SK-N-SH (cell line): ENCODE measurements at regions of chr22 and their contacts with region 1.

Region 1: DNA sequence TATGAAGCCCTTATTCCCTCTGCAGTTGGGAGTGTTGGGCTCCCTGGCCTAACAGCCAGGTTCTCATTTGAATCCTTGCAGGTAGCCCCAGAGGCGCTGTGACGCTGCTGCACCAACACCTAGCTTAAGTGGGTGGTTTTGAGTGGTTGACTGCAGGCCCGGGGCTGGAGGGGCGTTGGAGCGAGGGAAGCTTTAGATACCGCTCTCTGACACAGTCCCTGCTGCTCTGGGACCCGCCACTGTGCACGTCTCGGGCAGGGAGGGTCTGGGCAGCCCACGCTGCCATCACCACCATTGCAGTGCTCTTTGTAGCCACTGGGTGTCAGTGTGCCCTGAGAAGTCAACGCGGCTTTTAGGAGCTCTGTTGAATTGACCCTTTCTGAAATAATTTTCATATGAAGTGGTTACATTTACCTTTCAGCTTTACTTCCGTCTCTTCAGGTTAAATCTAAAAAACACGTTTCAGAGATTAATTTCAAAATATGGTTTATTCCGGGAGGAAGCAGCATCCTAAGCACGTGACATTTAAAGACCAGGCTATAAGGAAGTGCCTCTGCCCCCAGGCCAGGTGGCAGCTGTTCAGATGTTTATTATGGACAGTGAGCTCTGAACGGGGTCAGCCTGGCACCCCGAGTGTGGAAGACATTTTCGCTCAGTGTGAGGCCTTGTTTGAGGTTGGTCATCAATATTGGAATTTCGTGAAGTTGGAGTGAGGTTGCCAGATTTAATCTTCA is 30.9 kb upstream of the PARVB start:
- DNase-seq: peak; percentile 88
- H3K4me3 ChIP-seq: peak overlapping the region in 1 of 2 experiments; percentile 27; a peak in 1 of 4 replicates
- H3K27ac ChIP-seq: no peak overlapping the region; a peak in 1 of 4 replicates
- H3K4me1 ChIP-seq: peaks cover 0 to 6% of the 10 kb centered on the region in 2 experiments; a peak in 1 of 4 replicates
- H3K27me3 ChIP-seq: no peaks in the 10 kb centered on the region
- CTCF ChIP-seq: peak; percentile 98
- EP300 ChIP-seq: no peak
- RAD21 ChIP-seq: peak; percentile 91

Region 2: GRCh38 chr22:43976861-43977795 is 16.1 kb before region 1 on chr22:
- CTCF ChIA-PET with region 1: interaction called, 35 read pairs
- POLR2A ChIA-PET with region 1: no interaction called
- DNase-seq: no peak
- H3K4me3 ChIP-seq: no peak overlapping the region
- H3K27ac ChIP-seq: no peak overlapping the region
- H3K4me1 ChIP-seq: no peaks in the 10 kb centered on the region
- H3K27me3 ChIP-seq: no peaks in the 10 kb centered on the region
- CTCF ChIP-seq: no peak
- EP300 ChIP-seq: no peak
- RAD21 ChIP-seq: no peak

Region 3: GRCh38 chr22:44023404-44024287 is 30.5 kb after region 1 on chr22:
- CTCF ChIA-PET with region 1: interaction called, 16 read pairs
- POLR2A ChIA-PET with region 1: no interaction called
- DNase-seq: peak; percentile 87
- H3K4me3 ChIP-seq: peak overlapping the region; percentile 53 to 65
- H3K27ac ChIP-seq: peak overlapping the region; percentile 59 to 62; a peak in 3 of 4 replicates
- H3K4me1 ChIP-seq: peaks cover 11% of the 10 kb centered on the region in 2 experiments; a peak in 2 of 4 replicates
- H3K27me3 ChIP-seq: no peaks in the 10 kb centered on the region
- CTCF ChIP-seq: no peak
- EP300 ChIP-seq: no peak
- RAD21 ChIP-seq: no peak

Region 4: GRCh38 chr22:44068422-44069191 is 75.4 kb after region 1 on chr22:
- CTCF ChIA-PET with region 1: interaction called, 22 read pairs
- POLR2A ChIA-PET with region 1: no interaction called
- DNase-seq: no peak
- H3K4me3 ChIP-seq: no peak overlapping the region
- H3K27ac ChIP-seq: no peak overlapping the region
- H3K4me1 ChIP-seq: no peaks in the 10 kb centered on the region
- H3K27me3 ChIP-seq: no peaks in the 10 kb centered on the region
- CTCF ChIP-seq: no peak
- EP300 ChIP-seq: no peak
- RAD21 ChIP-seq: no peak

Region 5: DNA sequence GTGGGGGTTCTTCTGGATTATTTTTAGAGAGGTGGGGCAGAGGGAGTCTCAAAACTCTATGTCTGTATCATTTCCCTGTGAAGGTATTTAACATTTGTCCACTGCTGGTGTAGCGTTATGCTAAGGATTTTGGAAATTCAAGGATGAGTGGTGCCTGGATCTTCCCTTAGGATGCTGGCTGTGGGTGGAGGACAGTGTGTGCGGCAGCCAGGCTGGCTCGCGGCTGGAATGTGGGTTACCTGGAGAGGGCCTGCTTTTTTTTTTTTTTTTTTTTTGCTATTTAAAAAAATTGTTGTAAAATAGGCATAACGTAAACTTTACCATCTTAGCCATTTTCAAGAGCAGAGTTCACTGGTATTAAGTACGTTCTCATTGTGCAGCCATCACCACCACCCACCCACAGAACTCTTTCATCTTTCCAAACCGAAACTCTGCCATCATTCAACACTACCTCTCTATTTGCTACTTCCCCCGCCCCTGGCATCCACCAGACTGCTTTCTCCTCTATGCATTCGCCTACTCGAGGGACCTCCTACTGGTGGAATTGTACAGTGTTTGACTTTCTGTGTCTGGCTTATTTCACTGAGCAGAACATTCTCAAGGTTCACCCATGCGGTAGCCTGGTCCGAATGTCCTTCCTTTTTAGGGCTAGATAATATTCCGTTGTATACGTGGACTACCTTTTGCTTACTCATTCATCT is 98.0 kb after region 1 on chr22:
- CTCF ChIA-PET with region 1: interaction called, 234 read pairs
- POLR2A ChIA-PET with region 1: no interaction called
- DNase-seq: peak; percentile 59
- H3K4me3 ChIP-seq: no peak overlapping the region
- H3K27ac ChIP-seq: no peak overlapping the region
- H3K4me1 ChIP-seq: no peaks in the 10 kb centered on the region
- H3K27me3 ChIP-seq: no peaks in the 10 kb centered on the region
- CTCF ChIP-seq: peak; percentile 45
- EP300 ChIP-seq: no peak
- RAD21 ChIP-seq: peak; percentile 19; the same call in 1 of the 2 replicates

Region 6: DNA sequence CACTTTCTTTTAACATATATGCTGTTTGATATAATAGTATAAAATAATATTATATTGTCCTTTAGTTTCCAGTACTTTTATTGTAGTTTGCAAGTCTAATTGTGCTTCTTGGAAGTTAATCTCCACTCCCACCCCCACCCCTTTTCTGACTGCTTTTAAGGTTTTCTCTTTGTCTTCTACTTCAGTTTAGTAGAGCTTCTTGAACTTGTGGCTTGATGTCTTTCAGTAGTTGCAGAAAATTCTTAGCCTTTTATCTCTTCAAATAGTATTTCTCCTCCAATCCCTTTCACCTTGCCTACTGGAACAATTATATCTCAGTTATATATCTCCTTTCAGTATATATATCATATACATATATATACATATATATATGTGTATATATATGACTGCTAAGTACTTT is 244.1 kb after region 1 on chr22:
- CTCF ChIA-PET with region 1: no interaction called
- POLR2A ChIA-PET with region 1: no interaction called
- DNase-seq: no peak
- H3K4me3 ChIP-seq: no peak overlapping the region
- H3K27ac ChIP-seq: no peak overlapping the region
- H3K4me1 ChIP-seq: no peaks in the 10 kb centered on the region
- H3K27me3 ChIP-seq: no peaks in the 10 kb centered on the region
- CTCF ChIP-seq: no peak
- EP300 ChIP-seq: no peak
- RAD21 ChIP-seq: no peak

Region 7: GRCh38 chr22:44625981-44626687 is 632.9 kb after region 1 on chr22:
- CTCF ChIA-PET with region 1: interaction called, 121 read pairs
- POLR2A ChIA-PET with region 1: interaction called, 4 read pairs
- DNase-seq: peak; percentile 88
- H3K4me3 ChIP-seq: no peak overlapping the region; a peak in 1 of 4 replicates
- H3K27ac ChIP-seq: no peak overlapping the region
- H3K4me1 ChIP-seq: no peaks in the 10 kb centered on the region; a peak in 1 of 4 replicates
- H3K27me3 ChIP-seq: no peaks in the 10 kb centered on the region
- CTCF ChIP-seq: peak; percentile 98
- EP300 ChIP-seq: no peak
- RAD21 ChIP-seq: peak; percentile 98